Mammary epithelial cell (primary cell): ENCODE measurements at regions of chr1 and their contacts with region 1.

Region 1: GRCh38 chr1:244092293-244092963 is 41.3 kb downstream of the ZBTB18 start:
- DNase-seq: no peak
- H3K4me3 ChIP-seq: no peak overlapping the region
- H3K27ac ChIP-seq: no peak overlapping the region
- H3K4me1 ChIP-seq: no peaks in the 10 kb centered on the region
- H3K27me3 ChIP-seq: no peaks in the 10 kb centered on the region
- CTCF ChIP-seq: no peak

Region 2: GRCh38 chr1:243575070-243575469 is 517.4 kb before region 1 on chr1:
- CTCF ChIA-PET with region 1: no interaction called
- dilution Hi-C with region 1: no loop called
- in situ Hi-C with region 1: no loop called
- intact Hi-C with region 1: no loop called
- DNase-seq: no peak
- H3K4me3 ChIP-seq: no peak overlapping the region
- H3K27ac ChIP-seq: no peak overlapping the region
- H3K4me1 ChIP-seq: no peaks in the 10 kb centered on the region
- H3K27me3 ChIP-seq: no peaks in the 10 kb centered on the region
- CTCF ChIP-seq: no peak

Region 3: DNA sequence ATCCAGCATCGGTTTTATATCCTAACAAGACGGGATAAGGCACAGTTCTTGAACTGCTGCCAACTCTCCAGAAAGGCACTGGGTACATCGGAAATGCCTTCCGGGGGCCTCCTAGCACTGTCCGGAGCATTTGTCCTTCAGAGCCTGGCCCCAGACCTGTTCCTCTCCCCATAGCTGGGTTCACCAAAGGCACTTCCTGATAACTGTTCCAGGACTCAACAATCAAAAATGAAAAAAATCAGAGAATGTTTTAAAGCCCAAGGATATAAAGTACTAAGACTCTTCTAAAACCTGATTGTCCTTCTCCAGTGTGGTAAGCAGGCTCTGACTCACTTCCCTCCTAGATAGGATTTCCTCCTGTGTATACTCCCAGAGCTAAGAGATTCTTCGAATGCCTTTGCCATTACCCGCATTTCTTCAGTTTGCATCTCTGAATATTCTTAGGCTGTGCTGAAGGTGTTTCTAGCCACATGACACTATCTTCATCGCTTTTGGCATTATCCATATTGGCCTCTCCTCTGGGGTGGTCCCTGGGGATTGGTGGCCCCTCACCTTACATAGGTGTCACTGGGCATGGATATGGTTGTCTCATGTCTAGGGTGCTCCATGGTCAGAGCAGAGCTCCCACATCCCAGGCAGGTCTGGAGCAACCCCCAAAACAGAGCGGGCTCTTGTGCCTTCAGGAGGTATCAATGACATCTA is 71.6 kb after region 1 on chr1:
- CTCF ChIA-PET with region 1: no interaction called
- dilution Hi-C with region 1: no loop called
- in situ Hi-C with region 1: no loop called
- intact Hi-C with region 1: no loop called
- DNase-seq: peak; percentile 88
- H3K4me3 ChIP-seq: peak overlapping the region in 2 of 3 experiments; percentile 7 to 18
- H3K27ac ChIP-seq: peak overlapping the region; percentile 56
- H3K4me1 ChIP-seq: peaks cover 30% of the 10 kb centered on the region
- H3K27me3 ChIP-seq: no peaks in the 10 kb centered on the region
- CTCF ChIP-seq: no peak

Region 4: DNA sequence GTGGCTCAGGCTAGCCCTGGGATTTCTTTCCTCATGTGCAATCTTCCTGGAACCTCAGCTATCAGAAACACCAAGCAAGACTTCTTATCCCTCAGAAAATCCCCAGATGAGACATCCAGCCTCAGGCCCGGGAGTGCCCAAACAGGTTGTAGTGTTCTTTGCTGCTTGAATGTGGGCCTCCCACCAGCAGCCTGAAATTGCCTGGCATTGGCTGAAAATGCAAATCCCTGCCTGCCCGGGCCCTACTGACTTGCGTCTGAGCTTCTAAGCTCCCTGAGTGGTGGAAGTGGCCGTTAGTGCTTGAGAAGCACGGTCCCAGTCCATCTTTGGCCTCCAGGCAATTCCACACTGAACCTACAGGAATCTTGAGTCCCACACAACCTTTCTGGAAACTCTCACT is 105.5 kb after region 1 on chr1:
- CTCF ChIA-PET with region 1: no interaction called
- dilution Hi-C with region 1: loop called (anchors 5 kb)
- in situ Hi-C with region 1: no loop called
- intact Hi-C with region 1: no loop called
- DNase-seq: peak; percentile 82
- H3K4me3 ChIP-seq: no peak overlapping the region
- H3K27ac ChIP-seq: no peak overlapping the region
- H3K4me1 ChIP-seq: peaks cover 2% of the 10 kb centered on the region
- H3K27me3 ChIP-seq: no peaks in the 10 kb centered on the region
- CTCF ChIP-seq: no peak